Tibial artery (tissue), 4 donors: ENCODE measurements at regions of chr11 and their contacts with region 1.

Region 1: GRCh38 chr11:113796663-113797259 is 17.2 kb downstream of the CLDN25 start:
- DNase-seq: no peak
- H3K4me3 ChIP-seq: no peak overlapping the region
- H3K27ac ChIP-seq: no peak overlapping the region
- H3K4me1 ChIP-seq: no peaks in the 10 kb centered on the region
- H3K27me3 ChIP-seq: no peaks in the 10 kb centered on the region
- CTCF ChIP-seq: peak; percentile 64 to 72

Region 2: GRCh38 chr11:113736323-113736722 is 60.4 kb before region 1 on chr11:
- intact Hi-C with region 1: no loop called
- DNase-seq: no peak
- H3K4me3 ChIP-seq: no peak overlapping the region
- H3K27ac ChIP-seq: no peak overlapping the region
- H3K4me1 ChIP-seq: no peaks in the 10 kb centered on the region
- H3K27me3 ChIP-seq: no peaks in the 10 kb centered on the region
- CTCF ChIP-seq: no peak

Region 3: GRCh38 chr11:113752932-113753331 is 43.8 kb before region 1 on chr11:
- intact Hi-C with region 1: loop called (anchors 1 kb)
- DNase-seq: no peak
- H3K4me3 ChIP-seq: no peak overlapping the region
- H3K27ac ChIP-seq: no peak overlapping the region
- H3K4me1 ChIP-seq: no peaks in the 10 kb centered on the region
- H3K27me3 ChIP-seq: no peaks in the 10 kb centered on the region
- CTCF ChIP-seq: no peak

Region 4: GRCh38 chr11:113818426-113818825 is 21.7 kb after region 1 on chr11:
- intact Hi-C with region 1: no loop called
- DNase-seq: no peak
- H3K4me3 ChIP-seq: no peak overlapping the region
- H3K27ac ChIP-seq: no peak overlapping the region
- H3K4me1 ChIP-seq: no peaks in the 10 kb centered on the region
- H3K27me3 ChIP-seq: no peaks in the 10 kb centered on the region
- CTCF ChIP-seq: no peak

Region 5: DNA sequence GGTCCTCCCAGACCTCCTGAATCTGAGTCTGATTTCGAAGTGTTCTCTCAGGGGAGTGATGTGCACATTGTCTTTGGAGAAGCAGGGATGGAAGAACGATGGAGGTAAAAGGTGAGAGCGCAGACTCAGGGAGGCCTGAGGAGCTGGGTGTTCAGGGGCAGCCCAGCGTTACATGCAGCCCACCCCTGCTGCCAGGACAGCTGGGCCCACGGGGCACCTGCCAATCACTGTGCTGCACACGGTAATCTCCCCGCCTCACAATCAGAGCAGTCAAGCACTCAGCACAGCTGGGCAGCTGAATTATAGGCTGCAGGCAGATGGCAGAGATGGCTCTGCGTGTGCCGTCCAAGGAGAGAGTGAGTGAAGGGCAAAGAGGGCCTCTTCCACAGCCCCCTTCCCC is 160.2 kb after region 1 on chr11:
- intact Hi-C with region 1: no loop called
- DNase-seq: no peak
- H3K4me3 ChIP-seq: no peak overlapping the region
- H3K27ac ChIP-seq: no peak overlapping the region
- H3K4me1 ChIP-seq: no peaks in the 10 kb centered on the region
- H3K27me3 ChIP-seq: peaks cover 0 to 30% of the 10 kb centered on the region in 2 donors
- CTCF ChIP-seq: no peak